T-cell (primary cell): ENCODE measurements at regions of chr17 and their contacts with region 1.

Region 1: DNA sequence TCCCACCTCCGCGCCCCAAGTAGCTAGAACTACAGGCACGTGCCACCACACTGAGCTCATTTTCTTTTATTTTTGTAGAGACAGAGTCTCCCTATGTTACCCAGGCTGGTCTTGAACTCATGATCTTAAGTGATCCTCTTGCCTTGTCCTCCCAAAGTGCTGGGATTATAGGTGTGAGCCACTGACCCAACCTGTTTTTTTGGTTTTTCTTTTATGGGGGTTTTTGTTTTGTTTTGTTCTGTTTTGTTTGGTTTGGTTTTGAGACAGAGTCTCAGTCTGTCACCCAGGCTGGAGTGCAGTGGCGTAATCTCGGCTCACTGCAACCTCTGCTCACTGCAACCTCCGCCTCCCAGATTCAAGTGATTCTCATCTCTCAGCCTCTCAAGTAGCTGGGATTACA is 16.4 kb downstream of the GID4 start:
- DNase-seq: no peak
- ATAC-seq: no peak
- H3K4me3 ChIP-seq: no peak overlapping the region
- H3K4me3 Mint-ChIP-seq: no peak overlapping the region
- H3K27ac ChIP-seq: no peak overlapping the region
- H3K27ac Mint-ChIP-seq: no peak overlapping the region
- H3K4me1 ChIP-seq: no peaks in the 10 kb centered on the region
- H3K4me1 Mint-ChIP-seq: no peaks in the 10 kb centered on the region
- H3K27me3 ChIP-seq: no peaks in the 10 kb centered on the region
- H3K27me3 Mint-ChIP-seq: no peaks in the 10 kb centered on the region

Region 2: GRCh38 chr17:18025945-18026776 is 29.4 kb before region 1 on chr17:
- CTCF ChIA-PET with region 1: no interaction called
- POLR2A ChIA-PET with region 1: no interaction called
- DNase-seq: peak in 33 of 35 experiments; percentile 14 to 73 (median 38)
- ATAC-seq: peak; percentile 57 to 99 (median 78)
- H3K4me3 ChIP-seq: no peak overlapping the region
- H3K4me3 Mint-ChIP-seq: no peak overlapping the region
- H3K27ac ChIP-seq: no peak overlapping the region
- H3K27ac Mint-ChIP-seq: no peak overlapping the region
- H3K4me1 ChIP-seq: peaks cover 0 to 19% of the 10 kb centered on the region in 2 experiments
- H3K4me1 Mint-ChIP-seq: peaks cover 0 to 17% (median 13%) of the 10 kb centered on the region in 3 donors
- H3K27me3 ChIP-seq: no peaks in the 10 kb centered on the region
- H3K27me3 Mint-ChIP-seq: no peaks in the 10 kb centered on the region

Region 3: GRCh38 chr17:18102640-18103039 is 47.0 kb after region 1 on chr17:
- CTCF ChIA-PET with region 1: no interaction called
- POLR2A ChIA-PET with region 1: no interaction called
- DNase-seq: no peak
- ATAC-seq: no peak
- H3K4me3 ChIP-seq: no peak overlapping the region
- H3K4me3 Mint-ChIP-seq: no peak overlapping the region
- H3K27ac ChIP-seq: no peak overlapping the region
- H3K27ac Mint-ChIP-seq: no peak overlapping the region
- H3K4me1 ChIP-seq: no peaks in the 10 kb centered on the region
- H3K4me1 Mint-ChIP-seq: no peaks in the 10 kb centered on the region
- H3K27me3 ChIP-seq: no peaks in the 10 kb centered on the region
- H3K27me3 Mint-ChIP-seq: no peaks in the 10 kb centered on the region

Region 4: GRCh38 chr17:18213666-18214270 is 158.2 kb after region 1 on chr17:
- CTCF ChIA-PET with region 1: no interaction called
- POLR2A ChIA-PET with region 1: interaction called in 1 of 2 experiments, 13 read pairs
- DNase-seq: no peak
- ATAC-seq: no peak
- H3K4me3 ChIP-seq: no peak overlapping the region
- H3K4me3 Mint-ChIP-seq: no peak overlapping the region
- H3K27ac ChIP-seq: no peak overlapping the region
- H3K27ac Mint-ChIP-seq: no peak overlapping the region
- H3K4me1 ChIP-seq: peaks cover 0 to 5% of the 10 kb centered on the region in 2 experiments
- H3K4me1 Mint-ChIP-seq: peaks cover 0 to 5% (median 3%) of the 10 kb centered on the region in 3 donors
- H3K27me3 ChIP-seq: no peaks in the 10 kb centered on the region
- H3K27me3 Mint-ChIP-seq: no peaks in the 10 kb centered on the region